Ovary (tissue), 10 donors: ENCODE measurements at regions of chrX and their contacts with region 1.

Region 1: DNA sequence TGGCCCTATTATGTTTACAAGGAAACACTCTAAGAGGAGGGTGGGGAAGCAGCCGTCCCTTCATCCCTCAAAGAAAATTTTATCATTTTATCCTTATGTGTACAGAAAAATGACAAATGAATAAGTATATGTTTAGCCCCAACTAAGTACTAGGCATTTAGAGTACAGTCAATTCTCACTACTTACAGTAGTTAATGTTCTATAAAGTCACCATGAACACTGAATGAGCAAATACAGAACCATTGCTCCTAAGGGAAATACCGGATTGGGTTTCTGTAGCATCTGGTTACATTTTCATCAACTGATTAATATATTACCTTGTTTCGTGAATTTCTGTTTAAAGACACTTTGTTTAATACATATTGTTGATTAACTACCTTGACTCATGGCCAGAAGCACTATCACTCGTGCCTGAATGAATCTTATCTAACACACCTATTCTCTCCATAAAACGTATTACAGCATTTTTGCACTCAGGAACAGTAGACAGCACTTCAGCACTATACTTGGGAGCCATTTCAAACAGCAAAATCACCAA is 109.3 kb downstream of the ASB9 start:
- DNase-seq: no peak
- H3K4me3 ChIP-seq: no peak overlapping the region
- H3K27ac ChIP-seq: no peak overlapping the region
- H3K4me1 ChIP-seq: no peaks in the 10 kb centered on the region
- H3K27me3 ChIP-seq: no peaks in the 10 kb centered on the region
- CTCF ChIP-seq: no peak
- EP300 ChIP-seq: no peak
- POLR2A ChIP-seq: no peak

Region 2: DNA sequence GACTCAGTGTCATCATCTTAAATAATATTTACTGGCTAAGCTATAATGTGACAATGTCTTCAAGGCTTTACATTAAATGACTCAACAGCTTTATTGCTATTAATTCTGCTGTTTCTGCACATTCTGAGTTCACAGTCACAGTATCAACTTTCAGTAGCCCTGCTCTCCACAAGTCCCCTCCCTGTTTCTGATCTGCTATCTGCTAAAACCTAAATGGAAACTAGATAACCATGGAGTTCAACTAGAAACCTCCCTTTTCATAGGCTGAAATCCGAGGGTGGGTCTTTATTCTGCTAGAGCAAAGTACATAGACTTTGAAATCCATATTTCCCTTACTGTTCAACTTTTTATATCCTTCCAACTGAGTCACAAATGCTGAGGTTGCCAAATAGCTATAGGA is 445.5 kb after region 1 on chrX:
- intact Hi-C with region 1: loop called in 1 of 4 experiments (anchors 10 kb)
- DNase-seq: no peak
- H3K4me3 ChIP-seq: no peak overlapping the region
- H3K27ac ChIP-seq: no peak overlapping the region
- H3K4me1 ChIP-seq: no peaks in the 10 kb centered on the region
- H3K27me3 ChIP-seq: no peaks in the 10 kb centered on the region
- CTCF ChIP-seq: no peak
- EP300 ChIP-seq: no peak
- POLR2A ChIP-seq: no peak